BJ (cell line): ENCODE measurements at regions of chr10 and their contacts with region 1.

Region 1: DNA sequence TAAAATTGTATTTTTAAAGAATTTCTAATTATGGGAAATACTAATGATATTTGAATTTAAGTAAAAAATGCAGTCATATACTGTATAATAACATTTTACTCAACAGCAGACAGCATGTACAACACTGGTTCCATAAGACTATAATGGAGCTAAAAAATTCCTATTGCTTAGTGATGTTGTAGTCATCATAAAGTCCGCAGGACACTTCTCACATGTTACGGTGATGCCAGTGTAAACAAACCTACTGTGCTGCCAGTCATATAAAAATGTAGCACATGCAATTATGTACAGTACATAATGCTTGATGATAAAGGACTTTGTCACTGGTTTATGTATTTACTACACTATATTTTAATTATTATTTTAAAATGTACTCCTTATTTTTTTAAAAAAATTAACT is 629.3 kb downstream of the IPMK start:
- DNase-seq: no peak
- H3K4me3 ChIP-seq: no peak overlapping the region
- H3K27me3 ChIP-seq: no peaks in the 10 kb centered on the region
- CTCF ChIP-seq: no peak

Region 2: DNA sequence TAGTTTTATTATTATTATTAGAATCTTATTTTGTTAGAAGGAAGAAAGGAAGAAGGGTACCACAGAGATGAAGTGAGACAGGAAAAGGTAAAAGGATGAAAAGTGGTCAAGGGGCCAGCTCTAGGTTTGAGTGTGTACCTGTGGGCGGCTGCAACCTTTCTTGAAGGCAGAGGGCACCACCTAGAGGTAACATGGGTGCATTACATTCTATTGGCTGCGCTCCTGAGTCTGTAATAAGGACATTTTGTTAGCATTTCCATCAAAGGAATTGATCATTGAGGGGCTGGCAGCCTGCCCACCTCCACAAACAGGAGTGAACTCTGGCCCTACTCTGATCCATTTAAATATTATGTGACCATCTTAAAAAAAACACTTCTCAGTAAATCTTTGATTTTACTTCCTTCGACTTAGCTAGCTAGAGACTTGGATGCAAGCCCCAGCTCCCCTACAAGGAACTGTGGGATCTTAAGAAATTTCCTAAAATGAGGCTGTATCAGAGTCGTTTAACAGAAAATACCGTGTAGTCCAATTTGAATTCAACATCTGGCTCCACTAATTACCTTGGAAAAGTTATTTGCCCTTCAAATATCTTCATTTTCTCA is 18.9 kb after region 1 on chr10:
- CTCF ChIA-PET with region 1: interaction called, 24 read pairs
- POLR2A ChIA-PET with region 1: no interaction called
- DNase-seq: no peak
- H3K4me3 ChIP-seq: no peak overlapping the region
- H3K27me3 ChIP-seq: 0 out of 2 replicates have a peak, but pooled peaks cover 4% of the 10 kb centered on the region
- CTCF ChIP-seq: peak; percentile 88

Region 3: DNA sequence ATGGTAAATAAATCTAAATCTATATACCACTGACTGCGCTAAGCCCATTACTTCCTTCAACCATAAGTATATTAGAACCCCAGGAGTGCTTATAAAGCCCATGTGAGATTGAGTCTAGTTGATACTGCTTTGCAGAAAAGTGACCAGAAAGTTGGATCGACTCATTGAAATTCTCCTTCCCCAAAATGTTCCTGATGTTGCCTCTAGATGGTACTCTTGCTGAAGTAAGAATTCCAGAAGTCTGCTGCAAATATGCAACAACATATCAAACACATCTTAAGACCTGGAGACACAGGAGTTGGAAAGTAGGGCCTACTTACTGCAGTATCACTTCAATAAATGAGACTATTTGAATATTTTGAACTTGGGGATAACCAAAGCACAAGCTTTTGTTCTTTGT is 78.5 kb after region 1 on chr10:
- CTCF ChIA-PET with region 1: no interaction called
- POLR2A ChIA-PET with region 1: no interaction called
- DNase-seq: no peak
- H3K4me3 ChIP-seq: no peak overlapping the region
- H3K27me3 ChIP-seq: no peaks in the 10 kb centered on the region
- CTCF ChIP-seq: peak; percentile 57